CD4-positive, alpha-beta memory T cell (primary cell): ENCODE measurements at regions of chr4 and their contacts with region 1.

Region 1: GRCh38 chr4:37802068-37802666 is 24.3 kb upstream of the PGM2 start:
- DNase-seq: no peak
- H3K4me3 ChIP-seq: no peak overlapping the region
- H3K4me3 Mint-ChIP-seq: no peak overlapping the region
- H3K27ac ChIP-seq: no peak overlapping the region
- H3K27ac Mint-ChIP-seq: no peak overlapping the region
- H3K4me1 ChIP-seq: no peaks in the 10 kb centered on the region
- H3K4me1 Mint-ChIP-seq: no peaks in the 10 kb centered on the region
- H3K27me3 ChIP-seq: no peaks in the 10 kb centered on the region
- H3K27me3 Mint-ChIP-seq: peaks cover 0 to 4% of the 10 kb centered on the region in 2 donors

Region 2: GRCh38 chr4:36979533-36979932 is 822.6 kb before region 1 on chr4:
- CTCF ChIA-PET with region 1: no interaction called
- POLR2A ChIA-PET with region 1: no interaction called
- intact Hi-C with region 1: no loop called
- DNase-seq: no peak
- H3K4me3 ChIP-seq: no peak overlapping the region
- H3K4me3 Mint-ChIP-seq: no peak overlapping the region
- H3K27ac ChIP-seq: no peak overlapping the region
- H3K27ac Mint-ChIP-seq: no peak overlapping the region
- H3K4me1 ChIP-seq: no peaks in the 10 kb centered on the region
- H3K4me1 Mint-ChIP-seq: no peaks in the 10 kb centered on the region
- H3K27me3 ChIP-seq: no peaks in the 10 kb centered on the region
- H3K27me3 Mint-ChIP-seq: no peaks in the 10 kb centered on the region

Region 3: DNA sequence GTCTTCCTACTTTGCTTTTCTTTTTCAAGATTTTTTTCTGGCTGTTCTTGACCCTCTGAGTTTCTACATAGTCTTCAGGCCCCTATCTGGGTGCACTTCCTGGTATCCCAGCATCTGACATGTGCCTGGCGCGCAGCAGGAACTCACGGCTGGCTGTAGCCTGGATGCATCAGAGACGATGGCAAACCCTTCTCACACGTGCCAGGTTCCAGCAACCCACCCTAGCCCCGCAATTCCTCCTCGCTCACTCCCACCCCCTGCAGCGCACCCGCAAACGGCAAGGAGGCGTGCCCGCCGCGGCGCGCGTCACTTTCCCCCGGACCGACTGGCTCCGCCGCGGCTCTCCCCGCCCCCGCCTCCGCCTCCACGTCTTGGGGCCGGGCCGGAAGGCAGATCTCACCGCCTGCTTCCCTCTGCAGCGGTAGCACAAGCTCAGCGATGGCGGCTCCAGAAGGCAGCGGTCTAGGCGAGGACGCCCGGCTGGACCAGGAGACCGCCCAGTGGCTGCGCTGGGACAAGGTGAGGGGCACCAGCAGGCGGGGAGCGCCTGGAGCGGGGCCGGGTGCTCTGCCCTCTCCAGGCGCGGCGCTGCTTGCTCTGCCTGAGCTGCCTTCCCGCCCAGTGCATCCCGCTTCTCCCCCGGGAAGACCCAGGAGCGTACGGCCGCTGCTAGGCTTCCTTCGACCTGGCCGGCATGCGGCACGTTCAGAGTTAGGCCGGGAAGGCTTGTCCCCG is 24.3 kb after region 1 on chr4 and contains the start of gene PGM2:
- CTCF ChIA-PET with region 1: interaction called, 3 read pairs
- POLR2A ChIA-PET with region 1: interaction called, 7 read pairs
- intact Hi-C with region 1: loop called (anchors 2 kb)
- DNase-seq: peak; percentile 86 to 90 (median 88)
- H3K4me3 ChIP-seq: peak within 1 kb of the TSS; percentile 97 to 98
- H3K4me3 Mint-ChIP-seq: peak within 1 kb of the TSS; percentile 93 to 99 (median 97)
- H3K27ac ChIP-seq: peak within 1 kb of the TSS; percentile 69
- H3K27ac Mint-ChIP-seq: peak within 1 kb of the TSS; percentile 66 to 99 (median 96)
- H3K4me1 ChIP-seq: peaks cover 23% of the 10 kb centered on the region
- H3K4me1 Mint-ChIP-seq: peaks cover 23 to 56% (median 37%) of the 10 kb centered on the region in 4 donors
- H3K27me3 ChIP-seq: no peaks in the 10 kb centered on the region
- H3K27me3 Mint-ChIP-seq: no peaks in the 10 kb centered on the region
- total RNA-seq, gene PGM2: 16.9 to 18.4 TPM

Region 4: DNA sequence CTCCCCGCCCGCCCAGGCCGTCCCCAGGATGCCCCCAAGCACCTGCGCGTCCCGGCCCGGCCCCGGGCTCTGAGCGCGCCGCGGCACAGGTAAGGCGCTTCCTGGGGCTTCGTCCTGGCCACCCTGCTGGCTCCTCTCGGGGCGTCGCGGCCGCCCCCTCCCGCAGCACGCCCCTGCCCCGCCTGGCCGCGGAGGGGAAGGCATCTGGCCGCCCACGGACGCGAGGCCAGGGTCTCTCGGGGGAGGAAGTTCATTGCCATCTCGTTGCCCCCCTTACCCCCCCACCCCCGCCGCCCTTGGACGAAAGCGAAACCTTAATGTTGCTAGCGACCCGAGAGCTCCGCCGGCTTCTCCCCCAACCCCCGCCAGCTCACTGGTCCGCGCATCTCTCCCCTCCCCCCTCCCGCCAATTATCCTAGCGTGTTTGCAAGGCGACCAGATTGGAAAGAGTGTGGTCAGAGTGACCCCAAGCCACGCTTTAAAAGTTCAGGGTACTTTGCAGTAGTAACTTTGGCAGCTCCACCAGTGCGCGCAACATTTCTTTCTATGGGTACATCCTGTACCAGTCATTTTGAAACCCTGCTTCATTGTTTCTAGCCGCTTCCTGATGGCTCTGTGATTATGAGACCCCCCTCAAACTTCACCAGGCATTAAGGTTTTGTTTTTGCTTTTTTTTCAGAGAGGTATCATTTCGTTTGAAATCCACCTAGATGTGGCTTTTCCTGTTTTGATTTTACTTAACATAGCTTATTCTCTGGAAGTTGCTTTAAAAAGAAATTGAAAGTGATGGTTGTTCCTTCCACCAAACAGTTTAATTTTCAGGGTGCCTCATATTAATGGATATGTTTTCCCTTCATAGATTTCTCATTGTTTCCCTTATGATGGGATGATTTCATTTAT is 89.3 kb after region 1 on chr4:
- CTCF ChIA-PET with region 1: interaction called, 17 read pairs
- POLR2A ChIA-PET with region 1: no interaction called
- intact Hi-C with region 1: loop called (anchors 2 kb)
- DNase-seq: peak; percentile 54 to 72 (median 65)
- H3K4me3 ChIP-seq: peak overlapping the region; percentile 69 to 85
- H3K4me3 Mint-ChIP-seq: peak overlapping the region; percentile 93 to 99 (median 97)
- H3K27ac ChIP-seq: peak overlapping the region; percentile 61
- H3K27ac Mint-ChIP-seq: peak overlapping the region; percentile 90 to 98 (median 96)
- H3K4me1 ChIP-seq: peaks cover 33% of the 10 kb centered on the region
- H3K4me1 Mint-ChIP-seq: peaks cover 20 to 47% (median 40%) of the 10 kb centered on the region in 4 donors
- H3K27me3 ChIP-seq: no peaks in the 10 kb centered on the region
- H3K27me3 Mint-ChIP-seq: no peaks in the 10 kb centered on the region

Region 5: GRCh38 chr4:37977471-37978247 is 175.5 kb after region 1 on chr4:
- CTCF ChIA-PET with region 1: interaction called, 32 read pairs
- POLR2A ChIA-PET with region 1: interaction called, 6 read pairs
- intact Hi-C with region 1: loop called (anchors 1 kb)
- DNase-seq: peak; percentile 74 to 78 (median 77)
- H3K4me3 ChIP-seq: peak overlapping the region; percentile 67 to 69
- H3K4me3 Mint-ChIP-seq: peak overlapping the region; percentile 86 to 92 (median 88)
- H3K27ac ChIP-seq: peak overlapping the region; percentile 75
- H3K27ac Mint-ChIP-seq: peak overlapping the region; percentile 84 to 91 (median 88)
- H3K4me1 ChIP-seq: peaks cover 22% of the 10 kb centered on the region
- H3K4me1 Mint-ChIP-seq: peaks cover 16 to 40% (median 24%) of the 10 kb centered on the region in 4 donors
- H3K27me3 ChIP-seq: no peaks in the 10 kb centered on the region
- H3K27me3 Mint-ChIP-seq: no peaks in the 10 kb centered on the region

Region 6: GRCh38 chr4:38034986-38035882 is 233.1 kb after region 1 on chr4:
- CTCF ChIA-PET with region 1: interaction called, 129 read pairs
- POLR2A ChIA-PET with region 1: no interaction called
- intact Hi-C with region 1: no loop called
- DNase-seq: peak; percentile 46 to 60 (median 56)
- H3K4me3 ChIP-seq: no peak overlapping the region
- H3K4me3 Mint-ChIP-seq: no peak overlapping the region
- H3K27ac ChIP-seq: no peak overlapping the region
- H3K27ac Mint-ChIP-seq: peak overlapping the region in 1 of 7 donors; percentile 68
- H3K4me1 ChIP-seq: no peaks in the 10 kb centered on the region
- H3K4me1 Mint-ChIP-seq: peaks cover 0 to 3% (median 0%) of the 10 kb centered on the region in 4 donors
- H3K27me3 ChIP-seq: no peaks in the 10 kb centered on the region
- H3K27me3 Mint-ChIP-seq: no peaks in the 10 kb centered on the region